CD8-positive, alpha-beta T cell (primary cell): ENCODE measurements at regions of chr12 and their contacts with region 1.

Region 1: GRCh38 chr12:53352331-53353256 is 16.4 kb upstream of the SP7 start:
- DNase-seq: peak; percentile 67 to 92 (median 82)
- ATAC-seq: peak; percentile 100
- H3K4me3 ChIP-seq: no peak overlapping the region
- H3K4me3 Mint-ChIP-seq: no peak overlapping the region
- H3K27ac ChIP-seq: no peak overlapping the region
- H3K27ac Mint-ChIP-seq: peak overlapping the region; percentile 8
- H3K4me1 ChIP-seq: no peaks in the 10 kb centered on the region
- H3K4me1 Mint-ChIP-seq: peaks cover 6% of the 10 kb centered on the region
- H3K27me3 ChIP-seq: no peaks in the 10 kb centered on the region
- H3K27me3 Mint-ChIP-seq: no peaks in the 10 kb centered on the region
- CTCF ChIP-seq: peak; percentile 75

Region 2: DNA sequence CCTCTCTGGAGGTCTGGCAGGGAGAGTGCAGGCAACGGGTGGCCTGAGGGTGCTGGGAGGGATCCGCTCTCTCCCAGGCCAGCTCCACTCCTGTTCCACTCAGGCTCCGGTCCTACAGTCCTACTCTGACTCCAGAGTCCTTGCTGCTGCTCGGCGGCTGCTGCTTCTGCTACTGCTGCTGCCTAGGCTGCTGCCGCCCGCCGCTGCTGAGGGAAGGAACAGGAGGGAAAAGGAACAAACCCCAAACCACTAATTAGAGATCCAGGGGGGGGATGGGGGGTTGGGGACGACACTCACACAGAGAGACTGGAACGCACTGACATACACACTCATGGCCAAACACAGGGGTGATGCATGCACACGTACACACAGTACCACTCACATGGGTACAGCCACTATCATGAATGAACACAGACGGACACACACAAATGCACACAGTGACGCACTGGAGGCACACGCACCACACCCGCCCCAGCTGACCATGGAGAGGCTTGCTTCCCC is 16.4 kb before region 1 on chr12 and contains the start of gene SP7:
- CTCF ChIA-PET with region 1: interaction called, 202 read pairs
- POLR2A ChIA-PET with region 1: no interaction called
- intact Hi-C with region 1: no loop called
- DNase-seq: no peak
- ATAC-seq: no peak
- H3K4me3 ChIP-seq: no peak within 1 kb of the TSS
- H3K4me3 Mint-ChIP-seq: no peak within 1 kb of the TSS
- H3K27ac ChIP-seq: no peak within 1 kb of the TSS
- H3K27ac Mint-ChIP-seq: no peak within 1 kb of the TSS
- H3K4me1 ChIP-seq: peaks cover 11% of the 10 kb centered on the region
- H3K4me1 Mint-ChIP-seq: peaks cover 8% of the 10 kb centered on the region
- H3K27me3 ChIP-seq: peaks cover 30 to 34% of the 10 kb centered on the region in 2 experiments
- H3K27me3 Mint-ChIP-seq: peaks cover 29% of the 10 kb centered on the region
- CTCF ChIP-seq: no peak
- total RNA-seq, gene SP7: not detected

Region 3: DNA sequence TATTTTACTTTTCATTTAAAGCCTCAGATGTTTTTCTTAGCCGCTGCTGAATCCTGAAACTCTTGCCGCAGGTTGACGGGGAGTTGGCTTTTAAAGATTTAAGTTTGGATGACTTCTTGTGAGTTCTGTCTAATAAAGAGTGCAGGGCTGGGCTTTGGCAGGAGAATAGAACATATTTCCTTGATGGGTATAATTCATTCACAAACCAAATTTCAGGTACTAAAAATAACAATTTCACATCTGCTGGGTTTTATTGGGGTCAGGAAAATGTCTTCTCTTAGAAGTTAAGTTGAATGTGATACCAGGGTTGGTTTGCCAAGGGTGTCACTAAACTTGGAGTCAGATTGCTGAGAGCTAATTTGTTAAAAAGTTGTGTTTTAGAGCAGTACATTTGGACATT is 37.1 kb after region 1 on chr12:
- CTCF ChIA-PET with region 1: interaction called, 33 read pairs
- POLR2A ChIA-PET with region 1: no interaction called
- intact Hi-C with region 1: no loop called
- DNase-seq: no peak
- ATAC-seq: no peak
- H3K4me3 ChIP-seq: no peak overlapping the region
- H3K4me3 Mint-ChIP-seq: peak overlapping the region; percentile 40
- H3K27ac ChIP-seq: no peak overlapping the region
- H3K27ac Mint-ChIP-seq: peak overlapping the region; percentile 8
- H3K4me1 ChIP-seq: peaks cover 57% of the 10 kb centered on the region
- H3K4me1 Mint-ChIP-seq: peaks cover 55% of the 10 kb centered on the region
- H3K27me3 ChIP-seq: no peaks in the 10 kb centered on the region
- H3K27me3 Mint-ChIP-seq: no peaks in the 10 kb centered on the region
- CTCF ChIP-seq: no peak

Region 4: GRCh38 chr12:53414756-53415417 is 62.3 kb after region 1 on chr12:
- CTCF ChIA-PET with region 1: interaction called, 255 read pairs
- POLR2A ChIA-PET with region 1: interaction called, 4 read pairs
- intact Hi-C with region 1: no loop called
- DNase-seq: no peak
- ATAC-seq: no peak
- H3K4me3 ChIP-seq: no peak overlapping the region
- H3K4me3 Mint-ChIP-seq: no peak overlapping the region
- H3K27ac ChIP-seq: no peak overlapping the region
- H3K27ac Mint-ChIP-seq: peak overlapping the region; percentile 50
- H3K4me1 ChIP-seq: no peaks in the 10 kb centered on the region
- H3K4me1 Mint-ChIP-seq: peaks cover 30% of the 10 kb centered on the region
- H3K27me3 ChIP-seq: no peaks in the 10 kb centered on the region
- H3K27me3 Mint-ChIP-seq: no peaks in the 10 kb centered on the region
- CTCF ChIP-seq: no peak

Region 5: GRCh38 chr12:53427905-53428594 is 75.5 kb after region 1 on chr12:
- CTCF ChIA-PET with region 1: interaction called, 255 read pairs
- POLR2A ChIA-PET with region 1: no interaction called
- intact Hi-C with region 1: no loop called
- DNase-seq: peak in 1 of 9 experiments; percentile 13
- ATAC-seq: no peak
- H3K4me3 ChIP-seq: no peak overlapping the region
- H3K4me3 Mint-ChIP-seq: no peak overlapping the region
- H3K27ac ChIP-seq: no peak overlapping the region
- H3K27ac Mint-ChIP-seq: no peak overlapping the region
- H3K4me1 ChIP-seq: no peaks in the 10 kb centered on the region
- H3K4me1 Mint-ChIP-seq: no peaks in the 10 kb centered on the region
- H3K27me3 ChIP-seq: no peaks in the 10 kb centered on the region
- H3K27me3 Mint-ChIP-seq: no peaks in the 10 kb centered on the region
- CTCF ChIP-seq: no peak